PC-3 (cell line): ENCODE measurements at regions of chr16 and their contacts with region 1.

Region 1: GRCh38 chr16:12163970-12164369 is 187.4 kb downstream of the SNX29 start:
- DNase-seq: no peak
- ATAC-seq: no peak
- H3K4me3 ChIP-seq: no peak overlapping the region
- H3K27ac ChIP-seq: no peak overlapping the region
- H3K4me1 ChIP-seq: peaks cover 1% of the 10 kb centered on the region; the same call in 1 of the 2 replicates
- H3K27me3 ChIP-seq: no peaks in the 10 kb centered on the region
- CTCF ChIP-seq: no peak

Region 2: GRCh38 chr16:12132850-12133440 is 31.0 kb before region 1 on chr16:
- CTCF ChIA-PET with region 1: interaction called, 13 read pairs
- POLR2A ChIA-PET with region 1: no interaction called
- intact Hi-C with region 1: no loop called
- DNase-seq: no peak
- ATAC-seq: no peak
- H3K4me3 ChIP-seq: no peak overlapping the region
- H3K27ac ChIP-seq: no peak overlapping the region
- H3K4me1 ChIP-seq: no peaks in the 10 kb centered on the region
- H3K27me3 ChIP-seq: no peaks in the 10 kb centered on the region
- CTCF ChIP-seq: no peak